ENCODE measurements at regions of chr15 and their contacts with region 1.

Region 1: DNA sequence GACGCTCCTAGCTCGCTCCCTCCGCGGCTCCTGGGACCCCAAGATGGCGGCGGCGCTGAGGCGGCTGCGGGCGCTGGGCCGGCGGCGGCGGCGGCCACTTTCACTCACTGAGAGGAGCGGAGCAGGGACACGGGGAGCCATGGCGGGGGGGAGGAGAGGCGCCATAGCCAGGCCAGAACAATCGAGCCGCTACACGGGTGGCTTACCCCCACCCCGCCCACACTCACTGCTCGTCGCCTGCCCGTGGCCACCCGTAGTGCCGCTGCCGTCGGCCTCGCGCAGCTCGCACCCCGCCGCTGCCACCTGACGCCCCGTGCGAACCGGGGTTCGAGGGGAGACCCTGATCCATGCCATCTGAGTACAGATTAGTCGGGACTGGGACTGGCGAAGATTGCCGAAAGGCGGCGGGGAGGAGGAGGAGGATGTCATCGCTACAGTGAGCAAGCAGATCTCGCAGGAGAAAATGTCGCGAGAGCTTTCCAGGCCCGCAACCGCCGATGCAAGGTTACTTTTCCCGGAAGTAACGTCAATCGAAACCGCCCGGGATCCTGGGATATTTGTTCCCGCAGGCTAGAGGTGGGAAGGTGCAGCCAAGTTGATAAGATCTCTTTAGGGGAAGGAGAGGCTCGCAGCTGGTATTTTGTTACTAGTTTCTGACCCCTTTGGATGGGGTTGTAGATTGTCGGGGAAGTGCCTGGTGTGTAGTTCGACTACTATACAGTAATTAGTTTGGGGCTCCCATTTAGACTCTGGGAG is at the start of gene INO80:
- DNase-seq: peak; percentile 92 to 98 (median 96)
- ATAC-seq: peak; percentile 90
- H3K4me3 ChIP-seq: peak within 1 kb of the TSS; percentile 85
- H3K4me3 Mint-ChIP-seq: peak within 1 kb of the TSS; percentile 90 to 99 (median 96)
- H3K27ac ChIP-seq: peak within 1 kb of the TSS; percentile 80
- H3K27ac Mint-ChIP-seq: peak within 1 kb of the TSS; percentile 98 to 100 (median 99)
- H3K4me1 ChIP-seq: peaks cover 14 to 16% of the 10 kb centered on the region in 2 donors
- H3K4me1 Mint-ChIP-seq: peaks cover 5 to 40% (median 30%) of the 10 kb centered on the region in 7 donors
- H3K27me3 ChIP-seq: no peaks in the 10 kb centered on the region
- H3K27me3 Mint-ChIP-seq: peaks cover 0 to 4% (median 0%) of the 10 kb centered on the region in 5 donors
- total RNA-seq, gene INO80: 30.1 to 36.5 (median 32.3) TPM

Region 2: DNA sequence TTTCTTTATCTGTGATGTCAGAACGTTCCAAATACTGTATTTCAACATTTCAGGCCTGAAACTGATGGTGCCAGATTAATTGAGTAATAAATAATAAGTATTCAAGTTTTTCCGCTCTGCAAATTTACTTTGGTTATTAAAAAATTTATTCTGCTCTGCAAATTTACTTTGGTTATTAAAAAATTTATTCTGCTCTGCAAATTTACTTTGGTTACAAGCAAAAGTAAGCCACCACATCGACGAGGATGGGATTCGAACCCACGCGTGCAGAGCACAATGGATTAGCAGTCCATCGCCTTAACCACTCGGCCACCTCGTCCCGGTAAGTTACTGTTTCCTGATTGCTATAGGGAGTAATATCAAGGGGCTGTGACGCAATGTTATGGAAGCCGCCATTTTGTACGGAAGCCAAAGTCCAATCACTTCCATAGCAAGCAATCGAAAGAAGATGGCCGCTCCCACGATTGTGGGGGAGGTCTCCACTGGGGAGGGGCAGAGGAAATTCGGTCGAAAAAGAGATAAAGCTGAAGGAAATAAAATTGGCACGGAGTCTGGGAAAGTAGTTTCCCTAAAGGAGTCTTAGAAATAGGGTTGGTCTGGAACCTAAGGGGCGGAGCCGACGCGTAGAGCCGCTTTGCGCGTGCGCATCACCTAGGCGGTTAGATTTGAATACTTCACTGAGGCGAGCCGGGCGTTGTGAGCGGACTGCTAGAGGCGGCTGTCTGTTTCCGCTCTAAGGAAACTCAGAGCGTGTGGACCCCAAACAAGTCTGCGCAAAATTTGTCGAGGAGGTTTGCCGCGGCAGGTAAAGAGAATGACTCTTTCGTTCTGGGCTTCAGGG is 522.5 kb before region 1 on chr15 and contains the start of gene KNL1:
- CTCF ChIA-PET with region 1: no interaction called
- POLR2A ChIA-PET with region 1: no interaction called
- intact Hi-C with region 1: loop called in 1 of 2 experiments (anchors 1 kb)
- DNase-seq: peak; percentile 83 to 94 (median 91)
- ATAC-seq: peak; percentile 85
- H3K4me3 ChIP-seq: peak within 1 kb of the TSS; percentile 98
- H3K4me3 Mint-ChIP-seq: peak within 1 kb of the TSS; percentile 91 to 99 (median 96)
- H3K27ac ChIP-seq: peak within 1 kb of the TSS; percentile 83
- H3K27ac Mint-ChIP-seq: peak within 1 kb of the TSS; percentile 91 to 100 (median 98)
- H3K4me1 ChIP-seq: peaks cover 11 to 12% of the 10 kb centered on the region in 2 donors
- H3K4me1 Mint-ChIP-seq: peaks cover 13 to 41% (median 25%) of the 10 kb centered on the region in 7 donors
- H3K27me3 ChIP-seq: no peaks in the 10 kb centered on the region
- H3K27me3 Mint-ChIP-seq: peaks cover 0 to 12% (median 6%) of the 10 kb centered on the region in 5 donors
- total RNA-seq, gene KNL1: 0.16 to 41.5 (median 1.7) TPM

Region 3: DNA sequence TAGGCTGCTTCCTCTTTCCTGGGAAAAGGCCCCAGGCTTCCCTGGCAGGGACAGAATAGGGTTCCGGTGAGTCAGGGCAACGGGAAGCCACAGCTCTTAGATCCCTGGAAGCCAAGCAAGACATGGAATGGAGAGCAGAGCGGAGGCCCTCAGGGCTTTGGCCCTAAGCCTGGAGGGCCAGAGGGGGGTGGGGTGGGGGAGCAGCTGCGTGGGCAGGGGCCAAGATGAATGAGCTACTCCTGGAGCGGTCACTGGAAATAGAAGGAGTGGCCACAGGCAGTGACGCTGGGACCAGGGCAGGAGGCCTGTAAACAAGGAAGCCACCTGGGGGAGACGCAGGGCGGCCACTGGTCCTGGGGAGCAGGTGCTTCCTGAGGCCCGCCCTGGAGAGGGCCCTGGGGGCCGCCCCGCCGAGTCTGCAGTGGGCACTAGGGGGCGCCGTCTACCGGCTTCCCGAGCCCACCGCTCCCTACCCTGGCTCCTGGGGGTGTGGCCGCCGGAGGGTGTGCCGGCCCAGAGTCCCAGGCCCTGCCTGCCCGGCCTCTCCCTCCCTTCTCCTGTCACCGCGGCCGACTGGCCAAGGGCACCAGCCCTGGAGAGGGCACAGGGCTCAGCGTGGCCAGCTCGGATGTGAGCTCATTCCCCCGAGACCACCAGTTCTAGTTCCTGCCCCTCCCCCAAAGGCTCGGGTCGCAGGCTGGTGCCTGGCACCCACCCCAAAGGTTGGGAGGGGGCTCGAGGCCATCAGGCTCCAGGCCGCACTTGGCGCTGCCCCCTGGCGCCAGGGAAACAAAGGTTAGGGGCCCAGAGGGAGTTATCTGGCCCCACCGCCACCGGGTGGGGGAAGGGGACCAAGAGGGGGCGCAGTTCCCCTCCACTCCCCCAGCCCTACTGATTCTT is 210.0 kb before region 1 on chr15:
- CTCF ChIA-PET with region 1: no interaction called
- POLR2A ChIA-PET with region 1: interaction called, 5 read pairs
- intact Hi-C with region 1: loop called (anchors 2 to 10 kb)
- DNase-seq: peak; percentile 55 to 75 (median 69)
- ATAC-seq: peak; percentile 76
- H3K4me3 ChIP-seq: peak overlapping the region; percentile 66
- H3K4me3 Mint-ChIP-seq: peak overlapping the region; percentile 60 to 88 (median 84)
- H3K27ac ChIP-seq: peak overlapping the region; percentile 55
- H3K27ac Mint-ChIP-seq: peak overlapping the region in 8 of 9 donors; percentile 19 to 93 (median 88)
- H3K4me1 ChIP-seq: peaks cover 6 to 16% of the 10 kb centered on the region in 2 donors
- H3K4me1 Mint-ChIP-seq: peaks cover 29 to 44% (median 34%) of the 10 kb centered on the region in 7 donors
- H3K27me3 ChIP-seq: no peaks in the 10 kb centered on the region
- H3K27me3 Mint-ChIP-seq: no peaks in the 10 kb centered on the region

Region 4: DNA sequence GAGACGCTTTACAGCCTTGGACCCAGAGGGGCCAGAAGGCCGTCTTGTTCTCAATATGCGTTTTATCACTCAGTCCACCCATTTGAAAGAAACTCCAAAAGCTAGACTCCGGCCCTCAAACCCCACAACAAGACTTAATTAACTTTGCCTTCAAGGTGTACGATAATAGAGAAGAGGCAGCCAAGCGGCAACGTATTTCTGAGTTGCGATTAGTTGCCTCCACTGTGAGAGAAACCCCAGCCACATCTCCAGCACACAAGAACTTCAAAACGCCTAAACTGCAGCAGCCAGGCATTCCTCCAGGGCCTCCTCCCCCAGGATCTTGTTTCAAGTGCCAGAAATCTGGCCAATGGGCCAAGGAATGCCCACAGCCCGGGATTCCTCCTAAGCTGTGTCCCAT is 17.2 kb after region 1 on chr15:
- CTCF ChIA-PET with region 1: no interaction called
- POLR2A ChIA-PET with region 1: no interaction called
- intact Hi-C with region 1: no loop called
- DNase-seq: no peak
- ATAC-seq: no peak
- H3K4me3 ChIP-seq: no peak overlapping the region
- H3K4me3 Mint-ChIP-seq: no peak overlapping the region
- H3K27ac ChIP-seq: no peak overlapping the region
- H3K27ac Mint-ChIP-seq: no peak overlapping the region
- H3K4me1 ChIP-seq: no peaks in the 10 kb centered on the region
- H3K4me1 Mint-ChIP-seq: no peaks in the 10 kb centered on the region
- H3K27me3 ChIP-seq: no peaks in the 10 kb centered on the region
- H3K27me3 Mint-ChIP-seq: peaks cover 0 to 21% (median 5%) of the 10 kb centered on the region in 5 donors

Region 5: GRCh38 chr15:41230650-41231533 is 114.6 kb after region 1 on chr15 and contains the starts of genes CHP1 and EXD1:
- CTCF ChIA-PET with region 1: interaction called, 5 read pairs
- POLR2A ChIA-PET with region 1: interaction called, 4 read pairs
- intact Hi-C with region 1: loop called (anchors 1 kb)
- DNase-seq: peak; percentile 86 to 96 (median 90)
- ATAC-seq: peak; percentile 96
- H3K4me3 ChIP-seq: peak within 1 kb of the TSS; percentile 92
- H3K4me3 Mint-ChIP-seq: peak within 1 kb of the TSS; percentile 85 to 94 (median 91)
- H3K27ac ChIP-seq: peak within 1 kb of the TSS; percentile 82
- H3K27ac Mint-ChIP-seq: peak within 1 kb of the TSS; percentile 81 to 94 (median 92)
- H3K4me1 ChIP-seq: peaks cover 10 to 13% of the 10 kb centered on the region in 2 donors
- H3K4me1 Mint-ChIP-seq: peaks cover 17 to 36% (median 25%) of the 10 kb centered on the region in 7 donors
- H3K27me3 ChIP-seq: no peaks in the 10 kb centered on the region
- H3K27me3 Mint-ChIP-seq: peaks cover 0 to 11% (median 0%) of the 10 kb centered on the region in 5 donors
- total RNA-seq, gene CHP1: 20.2 to 70.6 (median 24.7) TPM
- total RNA-seq, gene EXD1: not detected

Region 6: GRCh38 chr15:41544650-41545015 is 428.3 kb after region 1 on chr15:
- CTCF ChIA-PET with region 1: no interaction called
- POLR2A ChIA-PET with region 1: no interaction called
- intact Hi-C with region 1: loop called in 1 of 2 experiments (anchors 5 kb)
- DNase-seq: peak in 1 of 9 donors; percentile 1
- ATAC-seq: no peak
- H3K4me3 ChIP-seq: peak overlapping the region; percentile 96
- H3K4me3 Mint-ChIP-seq: peak overlapping the region; percentile 92 to 96 (median 94)
- H3K27ac ChIP-seq: peak overlapping the region; percentile 94
- H3K27ac Mint-ChIP-seq: peak overlapping the region in 8 of 9 donors; percentile 62 to 95 (median 92)
- H3K4me1 ChIP-seq: peaks cover 0 to 6% of the 10 kb centered on the region in 2 donors
- H3K4me1 Mint-ChIP-seq: peaks cover 0 to 31% (median 19%) of the 10 kb centered on the region in 7 donors
- H3K27me3 ChIP-seq: no peaks in the 10 kb centered on the region
- H3K27me3 Mint-ChIP-seq: peaks cover 0 to 4% (median 0%) of the 10 kb centered on the region in 5 donors

Region 7: GRCh38 chr15:43105778-43106485 is 1989.6 kb after region 1 on chr15 and contains the start of gene UBR1:
- CTCF ChIA-PET with region 1: no interaction called
- POLR2A ChIA-PET with region 1: no interaction called
- intact Hi-C with region 1: loop called in 1 of 2 experiments (anchors 10 kb)
- DNase-seq: peak; percentile 65 to 91 (median 89)
- ATAC-seq: peak; percentile 94
- H3K4me3 ChIP-seq: peak within 1 kb of the TSS; percentile 86
- H3K4me3 Mint-ChIP-seq: peak within 1 kb of the TSS; percentile 86 to 99 (median 95)
- H3K27ac ChIP-seq: peak within 1 kb of the TSS; percentile 99
- H3K27ac Mint-ChIP-seq: peak within 1 kb of the TSS; percentile 97 to 99 (median 98)
- H3K4me1 ChIP-seq: peaks cover 21 to 24% of the 10 kb centered on the region in 2 donors
- H3K4me1 Mint-ChIP-seq: peaks cover 40 to 56% (median 52%) of the 10 kb centered on the region in 7 donors
- H3K27me3 ChIP-seq: no peaks in the 10 kb centered on the region
- H3K27me3 Mint-ChIP-seq: peaks cover 0 to 5% (median 0%) of the 10 kb centered on the region in 5 donors
- total RNA-seq, gene UBR1: 38.4 to 51.7 (median 48.0) TPM

Measured in naive thymus-derived CD4-positive, alpha-beta T cell (primary cell).